ENCODE measurements at regions of chr17 and their contacts with region 1.

Region 1: GRCh38 chr17:46179375-46179999 is 13.7 kb downstream of the KANSL1 start:
- DNase-seq: peak; percentile 57
- ATAC-seq: peak; percentile 43
- H3K4me3 ChIP-seq: no peak overlapping the region
- H3K4me3 Mint-ChIP-seq: peak overlapping the region; percentile 61
- H3K27ac ChIP-seq: peak overlapping the region in 1 of 2 donors; percentile 35
- H3K27ac Mint-ChIP-seq: peak overlapping the region; percentile 27
- H3K4me1 ChIP-seq: peaks cover 29 to 39% of the 10 kb centered on the region in 2 donors
- H3K4me1 Mint-ChIP-seq: peaks cover 79% of the 10 kb centered on the region
- H3K27me3 ChIP-seq: no peaks in the 10 kb centered on the region
- H3K27me3 Mint-ChIP-seq: no peaks in the 10 kb centered on the region
- CTCF ChIP-seq: no peak

Region 2: GRCh38 chr17:45976755-45977505 is 202.6 kb before region 1 on chr17:
- CTCF ChIA-PET with region 1: no interaction called
- POLR2A ChIA-PET with region 1: no interaction called
- intact Hi-C with region 1: no loop called
- DNase-seq: no peak
- ATAC-seq: no peak
- H3K4me3 ChIP-seq: no peak overlapping the region
- H3K4me3 Mint-ChIP-seq: no peak overlapping the region
- H3K27ac ChIP-seq: no peak overlapping the region
- H3K27ac Mint-ChIP-seq: no peak overlapping the region
- H3K4me1 ChIP-seq: peaks cover 21 to 31% of the 10 kb centered on the region in 2 donors
- H3K4me1 Mint-ChIP-seq: peaks cover 30% of the 10 kb centered on the region
- H3K27me3 ChIP-seq: no peaks in the 10 kb centered on the region
- H3K27me3 Mint-ChIP-seq: peaks cover 7% of the 10 kb centered on the region
- CTCF ChIP-seq: no peak

Region 3: DNA sequence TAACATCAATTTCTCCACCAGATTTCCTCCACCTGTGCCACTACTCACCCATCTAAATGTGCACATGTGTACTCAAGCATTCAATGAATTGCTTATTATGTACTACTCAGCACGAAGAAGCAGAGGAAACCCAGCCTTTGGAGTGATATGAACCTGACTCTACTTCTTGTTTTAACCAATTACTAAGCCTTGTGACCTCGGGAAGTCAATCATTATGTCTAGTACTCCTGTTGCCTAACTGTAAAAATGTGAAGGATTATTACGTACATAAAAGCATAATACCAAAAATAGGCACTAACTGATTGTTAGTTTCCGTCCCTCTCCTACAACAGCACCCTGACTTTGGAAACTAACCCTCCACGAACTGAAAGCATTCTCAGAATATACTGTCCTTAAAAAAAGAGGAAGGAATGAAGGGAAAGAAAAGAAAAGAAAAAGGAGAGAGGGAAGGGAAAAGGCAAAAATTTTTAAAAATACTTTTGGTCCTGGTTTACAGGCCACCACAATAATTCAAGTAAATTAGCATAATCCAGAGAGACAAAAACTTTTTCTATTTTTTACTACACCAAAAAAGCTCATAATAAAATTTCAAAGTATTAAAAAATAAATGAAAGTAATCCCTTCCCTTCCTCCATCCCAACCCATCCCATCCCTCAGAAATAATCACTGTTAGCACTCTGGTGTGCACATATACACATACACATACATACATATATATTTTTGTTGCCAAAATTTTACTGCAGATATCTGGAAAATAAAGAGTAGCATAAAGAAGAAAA is 39.9 kb before region 1 on chr17:
- CTCF ChIA-PET with region 1: interaction called, 3 read pairs
- POLR2A ChIA-PET with region 1: no interaction called
- intact Hi-C with region 1: loop called (anchors 5 kb)
- DNase-seq: no peak
- ATAC-seq: peak; percentile 35
- H3K4me3 ChIP-seq: no peak overlapping the region
- H3K4me3 Mint-ChIP-seq: peak overlapping the region; percentile 57
- H3K27ac ChIP-seq: peak overlapping the region in 1 of 2 donors; percentile 45
- H3K27ac Mint-ChIP-seq: peak overlapping the region; percentile 15
- H3K4me1 ChIP-seq: peaks cover 48 to 73% of the 10 kb centered on the region in 2 donors
- H3K4me1 Mint-ChIP-seq: peaks cover 84% of the 10 kb centered on the region
- H3K27me3 ChIP-seq: no peaks in the 10 kb centered on the region
- H3K27me3 Mint-ChIP-seq: no peaks in the 10 kb centered on the region
- CTCF ChIP-seq: no peak